ENCODE measurements at regions of chr17 and their contacts with region 1.

Region 1: DNA sequence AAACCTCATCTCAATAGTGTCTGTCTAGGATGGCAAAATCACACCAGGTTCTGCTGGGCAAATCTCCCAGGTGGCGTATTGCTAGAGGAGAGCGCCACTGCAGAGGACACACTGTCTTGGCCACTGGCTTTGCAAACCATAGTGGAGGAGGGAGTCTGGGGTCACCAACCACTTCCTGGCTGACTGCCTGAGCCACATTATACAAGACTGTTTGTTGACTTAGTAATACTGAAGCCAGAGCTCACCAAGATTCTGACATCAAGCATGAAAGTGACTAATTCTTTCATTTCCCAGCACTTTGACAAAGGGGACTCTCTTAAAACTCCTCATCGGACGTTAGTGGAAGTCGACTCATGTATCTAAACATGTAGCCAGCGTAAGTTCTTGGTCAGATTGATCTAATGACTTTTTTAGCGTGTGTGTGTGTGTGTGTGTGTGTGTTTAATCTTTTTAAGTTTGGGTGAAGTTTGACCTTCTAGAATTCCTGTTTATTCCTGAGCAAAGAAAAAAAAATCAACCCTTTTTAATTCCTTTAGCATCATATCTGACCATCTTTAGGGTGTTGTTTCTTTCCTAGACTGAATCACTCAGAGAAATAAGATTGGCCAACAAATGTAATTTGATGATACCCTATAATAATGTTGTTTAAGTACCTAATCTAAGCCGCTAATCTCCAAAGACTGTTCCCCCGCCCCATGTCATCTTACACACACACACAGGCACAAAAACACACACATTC is 13.7 kb downstream of the PITPNC1 start:
- DNase-seq: peak; percentile 47 to 82 (median 61)
- H3K4me3 ChIP-seq: peak overlapping the region in 1 of 2 donors; percentile 6
- H3K4me3 Mint-ChIP-seq: peak overlapping the region; percentile 69 to 96 (median 85)
- H3K27ac ChIP-seq: peak overlapping the region; percentile 53
- H3K27ac Mint-ChIP-seq: peak overlapping the region; percentile 92 to 97 (median 96)
- H3K4me1 ChIP-seq: peaks cover 76% of the 10 kb centered on the region
- H3K4me1 Mint-ChIP-seq: peaks cover 46 to 82% (median 64%) of the 10 kb centered on the region in 4 donors
- H3K27me3 ChIP-seq: no peaks in the 10 kb centered on the region
- H3K27me3 Mint-ChIP-seq: no peaks in the 10 kb centered on the region

Region 2: DNA sequence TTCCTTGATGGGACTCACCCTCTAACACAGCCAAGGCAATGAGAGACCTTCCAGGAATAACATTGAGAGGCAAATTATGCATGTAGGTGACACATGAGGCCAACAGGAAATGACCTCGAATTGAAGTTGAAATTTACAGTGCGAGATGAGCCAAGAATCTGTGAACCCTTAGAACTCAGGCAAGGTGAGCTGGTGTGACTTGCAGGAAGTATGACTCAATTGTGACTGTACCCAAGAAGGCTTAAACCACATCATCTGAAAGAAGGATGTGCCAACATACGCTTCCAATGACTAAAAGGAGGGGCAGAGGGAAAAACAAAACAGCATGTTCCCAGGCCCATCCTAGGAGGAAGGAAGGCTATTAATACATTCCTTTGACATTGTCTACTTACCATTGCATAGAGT is 31.1 kb after region 1 on chr17:
- CTCF ChIA-PET with region 1: interaction called, 8 read pairs
- POLR2A ChIA-PET with region 1: interaction called, 24 read pairs
- intact Hi-C with region 1: loop called (anchors 1 kb)
- DNase-seq: peak; percentile 78 to 89 (median 83)
- H3K4me3 ChIP-seq: peak overlapping the region in 1 of 2 donors; percentile 15
- H3K4me3 Mint-ChIP-seq: peak overlapping the region in 7 of 8 donors; percentile 19 to 80 (median 64)
- H3K27ac ChIP-seq: peak overlapping the region; percentile 77
- H3K27ac Mint-ChIP-seq: peak overlapping the region; percentile 85 to 98 (median 97)
- H3K4me1 ChIP-seq: peaks cover 65% of the 10 kb centered on the region
- H3K4me1 Mint-ChIP-seq: peaks cover 47 to 92% (median 72%) of the 10 kb centered on the region in 4 donors
- H3K27me3 ChIP-seq: no peaks in the 10 kb centered on the region
- H3K27me3 Mint-ChIP-seq: no peaks in the 10 kb centered on the region

Region 3: DNA sequence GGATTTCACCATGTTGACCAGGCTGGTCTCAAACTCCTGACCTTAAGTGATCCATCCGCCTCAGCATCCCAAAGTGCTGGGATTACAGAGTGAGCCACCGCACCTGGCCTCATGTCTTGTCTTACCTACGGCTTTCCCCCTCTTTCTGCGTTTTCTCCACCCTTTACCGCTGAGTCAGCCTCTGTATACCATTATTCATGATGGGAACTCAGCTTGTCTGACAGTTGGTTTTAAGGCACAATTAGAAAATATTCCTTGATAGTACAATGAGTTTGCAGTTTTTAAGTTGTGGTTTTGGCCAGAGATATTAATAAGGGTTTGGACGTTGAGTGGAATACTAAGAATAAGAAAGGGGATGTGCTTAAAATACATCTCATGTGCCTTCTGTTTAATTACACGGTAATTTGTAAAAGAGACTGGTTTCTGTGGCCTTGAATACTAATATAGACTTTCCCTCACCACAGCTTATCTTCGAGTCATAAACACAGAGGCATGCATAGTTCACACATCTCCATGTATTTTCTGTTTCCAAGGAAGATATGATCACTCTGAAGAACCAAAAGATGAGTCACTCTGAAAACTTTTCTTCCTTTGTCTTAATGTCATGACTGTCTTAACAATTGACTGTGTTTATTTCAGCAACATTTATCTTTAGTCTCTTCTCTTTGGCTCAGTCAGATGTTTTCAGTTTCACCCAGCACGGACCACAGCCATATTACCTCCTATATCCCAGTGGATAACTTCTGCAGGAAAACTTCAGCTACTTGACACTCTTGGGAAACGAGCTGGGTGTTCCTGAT is 40.6 kb after region 1 on chr17:
- CTCF ChIA-PET with region 1: interaction called, 25 read pairs
- POLR2A ChIA-PET with region 1: interaction called, 161 read pairs
- intact Hi-C with region 1: no loop called
- DNase-seq: peak in 1 of 5 donors; percentile 19
- H3K4me3 ChIP-seq: no peak overlapping the region
- H3K4me3 Mint-ChIP-seq: peak overlapping the region in 6 of 8 donors; percentile 7 to 58 (median 42)
- H3K27ac ChIP-seq: no peak overlapping the region
- H3K27ac Mint-ChIP-seq: peak overlapping the region; percentile 56 to 99 (median 77)
- H3K4me1 ChIP-seq: peaks cover 64% of the 10 kb centered on the region
- H3K4me1 Mint-ChIP-seq: peaks cover 43 to 82% (median 57%) of the 10 kb centered on the region in 4 donors
- H3K27me3 ChIP-seq: no peaks in the 10 kb centered on the region
- H3K27me3 Mint-ChIP-seq: no peaks in the 10 kb centered on the region

Measured in CD4-positive, alpha-beta memory T cell (primary cell).